ENCODE measurements at regions of chr1 and their contacts with region 1.

Region 1: GRCh38 chr1:174874331-174875053 is 125.3 kb upstream of the CACYBP start:
- DNase-seq: no peak
- ATAC-seq: peak; percentile 49
- H3K4me3 ChIP-seq: no peak overlapping the region
- H3K4me3 Mint-ChIP-seq: peak overlapping the region; percentile 55 to 77 (median 65)
- H3K27ac ChIP-seq: no peak overlapping the region
- H3K27ac Mint-ChIP-seq: peak overlapping the region in 8 of 9 donors; percentile 19 to 80 (median 65)
- H3K4me1 ChIP-seq: no peaks in the 10 kb centered on the region
- H3K4me1 Mint-ChIP-seq: peaks cover 4 to 40% (median 21%) of the 10 kb centered on the region in 7 donors
- H3K27me3 ChIP-seq: no peaks in the 10 kb centered on the region
- H3K27me3 Mint-ChIP-seq: no peaks in the 10 kb centered on the region

Region 2: GRCh38 chr1:173666646-173667045 is 1207.8 kb before region 1 on chr1:
- CTCF ChIA-PET with region 1: no interaction called
- POLR2A ChIA-PET with region 1: no interaction called
- intact Hi-C with region 1: no loop called
- DNase-seq: no peak
- ATAC-seq: no peak
- H3K4me3 ChIP-seq: no peak overlapping the region
- H3K4me3 Mint-ChIP-seq: no peak overlapping the region
- H3K27ac ChIP-seq: no peak overlapping the region
- H3K27ac Mint-ChIP-seq: no peak overlapping the region
- H3K4me1 ChIP-seq: no peaks in the 10 kb centered on the region
- H3K4me1 Mint-ChIP-seq: peaks cover 5 to 14% (median 7%) of the 10 kb centered on the region in 7 donors
- H3K27me3 ChIP-seq: no peaks in the 10 kb centered on the region
- H3K27me3 Mint-ChIP-seq: peaks cover 36 to 47% (median 44%) of the 10 kb centered on the region in 5 donors

Region 3: GRCh38 chr1:174890024-174890423 is 15.5 kb after region 1 on chr1:
- CTCF ChIA-PET with region 1: no interaction called
- POLR2A ChIA-PET with region 1: no interaction called
- intact Hi-C with region 1: loop called in 1 of 2 experiments (anchors 2 kb)
- DNase-seq: no peak
- ATAC-seq: no peak
- H3K4me3 ChIP-seq: no peak overlapping the region
- H3K4me3 Mint-ChIP-seq: no peak overlapping the region
- H3K27ac ChIP-seq: no peak overlapping the region
- H3K27ac Mint-ChIP-seq: peak overlapping the region in 1 of 9 donors; percentile 34
- H3K4me1 ChIP-seq: no peaks in the 10 kb centered on the region
- H3K4me1 Mint-ChIP-seq: peaks cover 2 to 12% (median 9%) of the 10 kb centered on the region in 7 donors
- H3K27me3 ChIP-seq: no peaks in the 10 kb centered on the region
- H3K27me3 Mint-ChIP-seq: no peaks in the 10 kb centered on the region

Measured in naive thymus-derived CD4-positive, alpha-beta T cell (primary cell).